RWPE1 (cell line): ENCODE measurements at regions of chr19 and their contacts with region 1.

Region 1: DNA sequence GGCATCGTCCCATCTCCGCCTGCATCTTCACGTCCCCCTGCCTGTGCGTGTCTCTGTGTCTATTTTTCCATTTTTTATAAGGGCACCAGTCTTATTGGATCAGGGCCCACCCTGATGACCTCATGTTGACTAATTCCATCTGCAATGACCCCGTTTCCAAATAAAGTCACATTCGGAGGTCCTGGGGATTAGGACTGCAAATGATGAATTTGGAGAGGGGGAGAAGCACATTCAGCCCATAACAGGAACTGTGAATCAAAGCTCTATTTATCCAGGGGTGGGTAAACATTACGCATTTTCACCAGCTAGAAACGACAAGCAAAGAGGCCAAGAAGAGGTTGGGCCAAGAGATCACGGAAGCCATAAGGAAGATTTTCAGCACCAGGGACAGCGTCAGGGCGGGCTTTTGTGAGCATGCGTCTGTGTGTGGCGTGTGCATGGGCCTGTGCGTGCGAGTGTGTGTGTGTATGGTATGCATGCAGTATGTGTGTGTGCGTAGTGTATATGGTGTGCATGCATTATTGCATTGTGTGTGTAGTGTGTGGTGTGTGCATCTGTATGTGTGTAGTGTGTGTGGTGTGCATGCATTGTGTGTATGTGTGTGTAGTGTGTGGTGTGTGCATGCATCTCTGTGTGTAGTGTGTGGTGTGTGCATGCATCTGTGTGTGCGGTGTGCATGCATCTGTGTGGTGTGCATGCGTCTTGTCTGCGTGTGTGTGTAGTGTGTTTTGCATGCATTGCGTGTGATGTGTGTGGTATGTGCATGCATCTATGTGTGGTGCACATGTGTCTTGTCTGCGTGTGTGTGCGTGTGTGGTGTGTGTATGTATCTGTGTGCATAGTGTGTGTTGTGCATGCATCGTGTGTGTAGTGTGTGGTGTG is 19.6 kb downstream of the CELF5 start:
- DNase-seq: no peak
- H3K27ac ChIP-seq: no peak overlapping the region
- CTCF ChIP-seq: no peak

Region 2: GRCh38 chr19:3233831-3234230 is 10.2 kb before region 1 on chr19:
- CTCF ChIA-PET with region 1: no interaction called
- POLR2A ChIA-PET with region 1: no interaction called
- DNase-seq: no peak
- H3K27ac ChIP-seq: no peak overlapping the region
- CTCF ChIP-seq: no peak

Region 3: DNA sequence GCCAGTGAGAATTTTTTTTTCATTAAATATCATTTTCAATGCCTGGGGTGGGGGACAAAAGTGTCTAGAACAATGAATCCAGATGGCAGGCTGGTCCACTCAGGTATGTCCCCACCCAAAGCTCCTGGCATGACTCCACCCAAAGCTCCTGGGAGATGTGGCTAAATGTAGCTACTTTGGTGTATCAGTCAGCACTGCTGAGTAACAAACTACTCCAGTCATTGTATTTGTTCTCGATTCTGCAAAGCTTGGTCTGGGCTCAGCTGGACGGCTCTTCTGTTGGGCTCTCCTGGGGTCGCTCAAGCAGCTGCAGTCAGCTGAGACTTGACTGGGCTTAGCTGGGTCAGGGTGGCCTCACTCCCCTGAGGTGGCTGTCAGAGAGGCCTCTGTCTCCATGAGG is 28.9 kb after region 1 on chr19:
- CTCF ChIA-PET with region 1: no interaction called
- POLR2A ChIA-PET with region 1: interaction called, 12 read pairs
- DNase-seq: no peak
- H3K27ac ChIP-seq: no peak overlapping the region
- CTCF ChIP-seq: no peak

Region 4: DNA sequence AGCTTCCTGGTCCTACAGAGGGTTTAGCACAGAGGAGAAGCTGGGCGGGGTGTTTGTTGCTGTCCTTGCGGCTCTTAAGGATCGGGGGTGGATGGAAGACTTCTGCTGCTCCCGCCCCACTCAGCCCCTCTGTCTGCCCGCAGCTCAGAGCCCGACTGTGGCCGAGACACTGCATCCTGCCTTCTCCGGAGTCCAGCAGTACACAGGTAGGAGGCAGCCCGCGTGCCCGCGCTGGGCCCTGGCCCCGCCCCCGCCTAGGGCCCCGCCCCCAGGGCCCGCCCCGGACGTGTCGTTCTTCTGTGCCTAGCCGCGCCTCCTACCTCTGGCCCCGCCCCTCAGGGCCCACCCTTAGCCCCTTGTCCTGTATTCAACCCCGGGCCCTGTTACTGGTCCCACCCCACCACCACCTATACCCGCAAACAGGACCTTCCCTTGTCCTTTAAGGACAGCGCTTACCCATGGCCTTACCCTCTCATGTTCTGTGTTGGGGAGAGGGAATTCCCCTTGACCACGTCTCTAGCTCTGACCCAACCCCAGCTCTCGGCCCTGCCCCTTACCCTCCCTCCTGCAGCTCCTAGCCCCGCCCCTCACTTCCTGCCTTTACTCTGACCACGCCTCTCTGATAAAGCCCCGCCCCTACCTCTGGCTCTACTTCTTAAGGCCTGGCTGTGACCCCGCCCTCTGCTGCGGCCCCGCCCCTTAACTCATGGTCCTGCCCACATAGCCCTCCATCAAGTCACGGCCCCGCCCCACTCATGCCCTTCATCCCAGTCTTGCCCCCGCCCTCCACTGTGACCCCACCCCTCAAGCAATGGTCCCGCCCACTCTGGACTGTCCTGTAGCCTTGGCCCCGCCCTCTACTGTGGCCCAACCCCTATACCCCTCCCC is 40.9 kb after region 1 on chr19:
- CTCF ChIA-PET with region 1: no interaction called
- POLR2A ChIA-PET with region 1: no interaction called
- DNase-seq: peak; percentile 65
- H3K27ac ChIP-seq: peak overlapping the region; percentile 50
- CTCF ChIP-seq: no peak

Region 5: GRCh38 chr19:3375221-3376090 is 131.4 kb after region 1 on chr19:
- CTCF ChIA-PET with region 1: no interaction called
- POLR2A ChIA-PET with region 1: no interaction called
- DNase-seq: no peak
- H3K27ac ChIP-seq: peak overlapping the region; percentile 97
- CTCF ChIP-seq: no peak